Caco-2 (cell line): ENCODE measurements at regions of chr20 and their contacts with region 1.

Region 1: GRCh38 chr20:43463864-43464785 is 6.4 kb downstream of the SRSF6 start:
- DNase-seq: no peak
- H3K4me3 ChIP-seq: no peak overlapping the region
- H3K4me3 Mint-ChIP-seq: no peak overlapping the region
- H3K27ac Mint-ChIP-seq: peak overlapping the region; percentile 53
- H3K4me1 ChIP-seq: peaks cover 9% of the 10 kb centered on the region
- H3K4me1 Mint-ChIP-seq: peaks cover 18% of the 10 kb centered on the region
- H3K27me3 ChIP-seq: no peaks in the 10 kb centered on the region
- H3K27me3 Mint-ChIP-seq: no peaks in the 10 kb centered on the region
- CTCF ChIP-seq: no peak

Region 2: GRCh38 chr20:43489206-43489891 is 25.2 kb after region 1 on chr20:
- CTCF ChIA-PET with region 1: interaction called, 11 read pairs
- POLR2A ChIA-PET with region 1: no interaction called
- intact Hi-C with region 1: no loop called
- DNase-seq: no peak
- H3K4me3 ChIP-seq: no peak overlapping the region
- H3K4me3 Mint-ChIP-seq: no peak overlapping the region
- H3K27ac Mint-ChIP-seq: no peak overlapping the region
- H3K4me1 ChIP-seq: no peaks in the 10 kb centered on the region
- H3K4me1 Mint-ChIP-seq: no peaks in the 10 kb centered on the region
- H3K27me3 ChIP-seq: no peaks in the 10 kb centered on the region
- H3K27me3 Mint-ChIP-seq: no peaks in the 10 kb centered on the region
- CTCF ChIP-seq: no peak

Region 3: GRCh38 chr20:43736588-43737158 is 272.5 kb after region 1 on chr20:
- CTCF ChIA-PET with region 1: no interaction called
- POLR2A ChIA-PET with region 1: interaction called, 18 read pairs
- intact Hi-C with region 1: no loop called
- DNase-seq: no peak
- H3K4me3 ChIP-seq: no peak overlapping the region
- H3K4me3 Mint-ChIP-seq: no peak overlapping the region
- H3K27ac Mint-ChIP-seq: no peak overlapping the region
- H3K4me1 ChIP-seq: no peaks in the 10 kb centered on the region; the same call in 1 of the 2 replicates
- H3K4me1 Mint-ChIP-seq: no peaks in the 10 kb centered on the region
- H3K27me3 ChIP-seq: no peaks in the 10 kb centered on the region
- H3K27me3 Mint-ChIP-seq: no peaks in the 10 kb centered on the region
- CTCF ChIP-seq: no peak